Activated CD8-positive, alpha-beta T cell treated with anti-CD3 and anti-CD28 coated beads, Interleukin-2, amount 10 ng/mL, durations not matched to agents 7 days and 5 days (primary cell): ENCODE measurements at regions of chrX and their contacts with region 1.

Region 1: DNA sequence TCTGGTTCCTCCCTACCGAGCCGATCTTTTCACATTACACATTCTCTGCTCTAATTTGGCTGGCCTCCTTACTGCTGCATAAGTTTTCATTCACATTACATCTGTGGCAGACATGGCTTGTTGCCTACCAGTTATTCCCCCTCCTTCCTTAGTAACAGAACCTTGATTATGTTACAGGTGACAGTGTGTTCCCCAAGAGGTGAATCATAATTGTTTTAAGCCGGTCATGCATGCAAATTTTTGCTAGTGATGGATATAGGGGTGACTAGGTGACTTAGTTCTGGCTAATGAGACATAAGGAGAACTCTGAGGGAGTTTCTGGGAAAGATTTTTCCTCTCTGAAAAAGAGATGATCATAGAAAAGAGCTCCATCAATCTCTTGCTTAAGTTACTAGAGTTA is 8.4 kb upstream of the LAMP2 start:
- DNase-seq: no peak
- ATAC-seq: no peak
- H3K4me3 Mint-ChIP-seq: no peak overlapping the region
- H3K27ac Mint-ChIP-seq: no peak overlapping the region
- H3K4me1 Mint-ChIP-seq: peaks cover 6% of the 10 kb centered on the region
- H3K27me3 Mint-ChIP-seq: peaks cover 2% of the 10 kb centered on the region

Region 2: DNA sequence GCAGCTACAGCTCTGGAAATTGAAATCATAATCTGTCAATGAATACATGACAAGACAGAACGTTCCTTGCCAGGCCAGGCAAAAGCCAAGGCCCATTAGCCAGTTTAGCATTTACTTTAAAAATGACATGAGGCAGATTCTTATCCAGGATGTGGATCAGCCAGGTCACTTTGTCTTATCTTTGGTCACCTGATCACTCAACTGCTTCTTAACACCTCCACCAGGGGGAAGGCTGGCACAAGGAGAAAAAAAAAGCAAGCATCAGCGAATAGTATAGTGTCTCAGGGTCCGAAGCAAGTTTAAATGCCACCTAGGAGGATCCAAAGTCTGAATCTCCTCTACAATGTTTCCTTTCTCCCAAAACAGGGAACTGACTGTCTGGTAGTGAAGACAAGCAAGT is 96.8 kb before region 1 on chrX:
- CTCF ChIA-PET with region 1: interaction called, 12 read pairs
- POLR2A ChIA-PET with region 1: no interaction called
- DNase-seq: peak; percentile 41
- ATAC-seq: peak; percentile 58
- H3K4me3 Mint-ChIP-seq: no peak overlapping the region
- H3K27ac Mint-ChIP-seq: no peak overlapping the region
- H3K4me1 Mint-ChIP-seq: peaks cover 8% of the 10 kb centered on the region
- H3K27me3 Mint-ChIP-seq: peaks cover 6% of the 10 kb centered on the region

Region 3: DNA sequence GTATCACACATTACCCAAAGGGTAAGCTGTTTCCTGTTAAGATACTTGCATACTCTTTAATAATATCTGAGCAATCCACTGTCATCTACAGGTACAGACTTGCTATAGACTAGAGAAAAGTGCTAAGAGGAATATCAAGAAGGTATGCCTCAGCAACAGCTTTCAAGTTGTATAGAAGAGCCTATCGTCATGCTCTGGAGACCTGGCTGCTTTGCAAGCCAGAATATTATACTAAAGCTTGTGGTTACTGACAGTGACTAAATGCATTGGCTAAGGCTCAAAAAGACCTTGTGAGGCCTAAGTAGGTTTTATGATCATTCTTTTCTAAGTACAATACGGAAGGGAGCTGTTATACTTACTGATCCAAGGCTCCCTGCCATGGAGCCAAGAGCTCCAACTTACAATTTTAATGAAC is 19.7 kb before region 1 on chrX:
- CTCF ChIA-PET with region 1: interaction called, 10 read pairs
- POLR2A ChIA-PET with region 1: interaction called, 4 read pairs
- DNase-seq: no peak
- ATAC-seq: peak; percentile 63
- H3K4me3 Mint-ChIP-seq: no peak overlapping the region
- H3K27ac Mint-ChIP-seq: peak overlapping the region; percentile 65
- H3K4me1 Mint-ChIP-seq: peaks cover 39% of the 10 kb centered on the region
- H3K27me3 Mint-ChIP-seq: no peaks in the 10 kb centered on the region

Region 4: DNA sequence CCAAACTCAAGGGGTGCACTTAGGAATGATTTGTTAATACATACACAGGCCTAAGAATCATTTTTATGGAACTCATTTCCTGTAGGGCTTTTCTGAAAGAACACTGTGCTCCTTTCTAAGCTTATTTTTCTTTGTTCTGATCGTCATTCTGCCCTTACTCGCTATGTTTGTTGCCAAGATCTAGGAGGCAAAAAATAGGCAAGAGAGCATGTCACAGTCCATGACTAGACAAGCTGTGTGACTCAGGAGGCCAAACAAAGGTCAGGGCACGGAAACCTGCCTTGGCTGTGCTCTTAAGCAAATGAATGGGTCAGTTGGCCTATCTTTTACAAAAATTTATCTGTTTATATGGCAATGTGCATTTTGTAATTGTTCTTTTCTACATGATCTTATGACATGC is 194.9 kb after region 1 on chrX:
- CTCF ChIA-PET with region 1: no interaction called
- POLR2A ChIA-PET with region 1: no interaction called
- DNase-seq: no peak
- ATAC-seq: no peak
- H3K4me3 Mint-ChIP-seq: no peak overlapping the region
- H3K27ac Mint-ChIP-seq: no peak overlapping the region
- H3K4me1 Mint-ChIP-seq: peaks cover 5% of the 10 kb centered on the region
- H3K27me3 Mint-ChIP-seq: no peaks in the 10 kb centered on the region